ENCODE measurements at regions of chr5 and their contacts with region 1.

Region 1: GRCh38 chr5:134664448-134664847 is 15.9 kb downstream of the SEC24A start:
- DNase-seq: no peak
- H3K4me3 ChIP-seq: no peak overlapping the region
- H3K27ac ChIP-seq: no peak overlapping the region
- H3K4me1 ChIP-seq: no peaks in the 10 kb centered on the region
- H3K27me3 ChIP-seq: no peaks in the 10 kb centered on the region
- CTCF ChIP-seq: no peak

Region 2: DNA sequence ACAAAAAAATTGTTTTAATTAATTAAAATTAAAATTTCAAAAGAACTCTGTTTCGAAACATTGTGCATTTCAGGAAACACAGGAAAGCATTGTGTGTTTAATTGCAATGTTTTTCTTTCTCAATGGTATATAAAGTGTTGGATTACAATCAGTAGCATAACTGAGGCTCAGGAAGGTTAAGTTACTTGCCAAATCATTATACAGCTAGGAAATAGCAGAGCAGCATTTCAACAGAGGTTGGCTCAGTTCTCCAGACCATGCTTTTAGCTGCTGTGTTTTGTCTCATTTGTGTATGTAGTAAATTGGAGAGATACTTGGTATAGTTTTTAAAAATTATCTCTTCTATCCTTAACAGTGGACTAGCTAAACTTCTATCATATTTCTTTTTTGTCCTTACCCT is 43.9 kb after region 1 on chr5:
- CTCF ChIA-PET with region 1: no interaction called
- POLR2A ChIA-PET with region 1: no interaction called
- intact Hi-C with region 1: loop called (anchors 2 kb)
- DNase-seq: no peak
- H3K4me3 ChIP-seq: no peak overlapping the region
- H3K27ac ChIP-seq: no peak overlapping the region
- H3K4me1 ChIP-seq: no peaks in the 10 kb centered on the region
- H3K27me3 ChIP-seq: no peaks in the 10 kb centered on the region
- CTCF ChIP-seq: no peak

Region 3: GRCh38 chr5:134724872-134725271 is 60.4 kb after region 1 on chr5:
- CTCF ChIA-PET with region 1: no interaction called
- POLR2A ChIA-PET with region 1: no interaction called
- intact Hi-C with region 1: no loop called
- DNase-seq: no peak
- H3K4me3 ChIP-seq: no peak overlapping the region
- H3K27ac ChIP-seq: no peak overlapping the region
- H3K4me1 ChIP-seq: no peaks in the 10 kb centered on the region
- H3K27me3 ChIP-seq: no peaks in the 10 kb centered on the region
- CTCF ChIP-seq: no peak

Region 4: DNA sequence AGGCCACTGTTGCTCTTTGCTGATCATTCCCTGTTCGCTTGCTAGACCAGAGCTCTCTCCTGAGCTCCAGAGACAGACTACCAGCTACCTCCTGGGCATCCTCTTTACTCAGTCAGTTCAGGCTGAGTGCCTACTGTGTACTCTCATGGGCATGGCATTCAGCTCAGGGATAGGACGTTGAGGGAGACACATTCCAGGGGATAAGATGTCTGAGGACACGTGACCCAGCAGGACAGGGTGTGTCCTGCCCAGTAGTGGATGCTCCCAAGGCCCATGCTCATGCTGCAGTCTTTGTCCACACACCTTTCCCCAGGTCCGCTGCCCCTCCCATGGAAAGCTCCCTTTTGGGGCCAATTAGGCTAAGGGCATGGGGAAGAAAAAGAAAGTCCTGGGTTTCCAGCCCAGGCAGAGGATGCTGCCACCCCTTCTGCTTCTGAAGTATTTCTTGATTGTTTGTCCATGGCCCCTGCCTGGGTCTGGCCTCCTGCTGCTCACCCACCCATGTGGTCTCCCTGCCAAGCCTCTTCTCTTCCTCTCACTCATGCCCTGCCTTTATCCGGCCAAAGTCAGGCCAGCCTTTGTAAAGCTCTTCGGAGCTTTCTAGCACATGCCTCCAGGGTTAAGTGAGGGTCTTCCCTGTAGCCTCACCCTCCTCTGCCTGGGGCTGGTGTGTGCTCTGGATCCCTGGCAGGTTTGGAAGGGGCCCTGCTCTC is 430.0 kb after region 1 on chr5:
- CTCF ChIA-PET with region 1: no interaction called
- POLR2A ChIA-PET with region 1: no interaction called
- intact Hi-C with region 1: no loop called
- DNase-seq: no peak
- H3K4me3 ChIP-seq: no peak overlapping the region
- H3K27ac ChIP-seq: no peak overlapping the region
- H3K4me1 ChIP-seq: no peaks in the 10 kb centered on the region
- H3K27me3 ChIP-seq: no peaks in the 10 kb centered on the region
- CTCF ChIP-seq: no peak

Region 5: GRCh38 chr5:135179308-135179980 is 515.0 kb after region 1 on chr5:
- CTCF ChIA-PET with region 1: no interaction called
- POLR2A ChIA-PET with region 1: no interaction called
- intact Hi-C with region 1: no loop called
- DNase-seq: no peak
- H3K4me3 ChIP-seq: no peak overlapping the region
- H3K27ac ChIP-seq: no peak overlapping the region
- H3K4me1 ChIP-seq: no peaks in the 10 kb centered on the region
- H3K27me3 ChIP-seq: no peaks in the 10 kb centered on the region
- CTCF ChIP-seq: no peak

Measured in A673 (cell line).